OCI-LY7 (cell line): ENCODE measurements at regions of chr11 and their contacts with region 1.

Region 1: DNA sequence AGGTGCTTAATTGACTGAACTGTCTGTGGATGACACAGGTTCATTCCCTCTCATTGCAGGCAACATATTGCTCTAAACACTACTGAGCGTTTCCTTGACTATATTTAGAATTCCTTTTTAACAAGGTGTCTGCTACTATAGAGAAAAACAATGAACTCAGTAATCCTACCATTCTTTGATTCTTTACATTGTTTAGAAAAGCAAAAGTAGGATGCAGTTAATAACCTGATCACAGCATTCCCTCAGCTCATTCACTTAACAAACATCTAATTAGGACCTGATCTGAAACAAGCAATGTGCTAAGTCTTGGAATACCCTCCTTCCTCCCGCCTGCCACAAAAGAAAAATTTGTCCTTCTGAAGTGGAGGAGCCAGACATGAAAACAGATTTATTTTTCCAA is 313.1 kb downstream of the LRRC4C start:
- DNase-seq: no peak
- H3K4me3 ChIP-seq: no peak overlapping the region
- H3K27ac ChIP-seq: no peak overlapping the region
- H3K4me1 ChIP-seq: no peaks in the 10 kb centered on the region
- CTCF ChIP-seq: no peak

Region 2: GRCh38 chr11:41102471-41102870 is 43.9 kb before region 1 on chr11:
- CTCF ChIA-PET with region 1: no interaction called
- POLR2A ChIA-PET with region 1: no interaction called
- intact Hi-C with region 1: loop called (anchors 5 kb)
- DNase-seq: no peak
- H3K4me3 ChIP-seq: no peak overlapping the region
- H3K27ac ChIP-seq: no peak overlapping the region
- H3K4me1 ChIP-seq: no peaks in the 10 kb centered on the region
- CTCF ChIP-seq: no peak